Activated B cell treated with CpG ODN at 0.5 μM for 24 hours (primary cell): ENCODE measurements at regions of chr21 and their contacts with region 1.

Region 1: DNA sequence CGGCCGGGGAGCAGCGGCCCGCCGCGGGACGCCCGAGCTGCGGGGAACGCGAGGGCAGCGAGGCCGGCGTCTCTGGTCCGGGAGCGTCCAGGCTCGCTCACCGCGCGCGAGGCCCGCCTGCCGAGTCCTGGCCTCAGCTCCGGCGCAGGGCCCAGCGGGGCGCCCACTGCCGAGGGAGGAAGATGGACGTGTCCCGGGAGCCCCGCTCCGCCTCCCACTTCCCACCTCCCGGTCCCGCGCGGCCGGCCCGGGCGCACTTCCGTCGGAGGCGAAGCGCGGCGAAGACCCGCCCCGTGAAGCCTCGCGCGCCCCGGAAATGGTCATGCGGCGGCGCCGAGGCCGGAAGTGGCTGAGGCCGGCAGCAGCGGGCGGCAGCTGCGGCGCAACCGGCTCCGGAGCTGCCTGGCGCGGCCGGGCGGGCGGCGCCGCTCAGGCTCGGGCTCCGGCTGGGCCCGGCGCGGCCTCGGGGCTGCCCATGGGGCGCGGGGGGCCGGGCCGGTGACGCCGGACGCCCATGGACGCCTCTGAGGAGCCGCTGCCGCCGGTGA is at the start of gene TRAPPC10:
- DNase-seq: peak; percentile 83
- ATAC-seq: peak; percentile 66
- H3K4me3 Mint-ChIP-seq: peak within 1 kb of the TSS; percentile 87
- H3K27ac Mint-ChIP-seq: peak within 1 kb of the TSS; percentile 86
- H3K4me1 Mint-ChIP-seq: peaks cover 43% of the 10 kb centered on the region
- H3K27me3 Mint-ChIP-seq: no peaks in the 10 kb centered on the region
- CTCF ChIP-seq: no peak
- total RNA-seq, gene TRAPPC10: 77.8 and 96.0 TPM in 2 replicates

Region 2: DNA sequence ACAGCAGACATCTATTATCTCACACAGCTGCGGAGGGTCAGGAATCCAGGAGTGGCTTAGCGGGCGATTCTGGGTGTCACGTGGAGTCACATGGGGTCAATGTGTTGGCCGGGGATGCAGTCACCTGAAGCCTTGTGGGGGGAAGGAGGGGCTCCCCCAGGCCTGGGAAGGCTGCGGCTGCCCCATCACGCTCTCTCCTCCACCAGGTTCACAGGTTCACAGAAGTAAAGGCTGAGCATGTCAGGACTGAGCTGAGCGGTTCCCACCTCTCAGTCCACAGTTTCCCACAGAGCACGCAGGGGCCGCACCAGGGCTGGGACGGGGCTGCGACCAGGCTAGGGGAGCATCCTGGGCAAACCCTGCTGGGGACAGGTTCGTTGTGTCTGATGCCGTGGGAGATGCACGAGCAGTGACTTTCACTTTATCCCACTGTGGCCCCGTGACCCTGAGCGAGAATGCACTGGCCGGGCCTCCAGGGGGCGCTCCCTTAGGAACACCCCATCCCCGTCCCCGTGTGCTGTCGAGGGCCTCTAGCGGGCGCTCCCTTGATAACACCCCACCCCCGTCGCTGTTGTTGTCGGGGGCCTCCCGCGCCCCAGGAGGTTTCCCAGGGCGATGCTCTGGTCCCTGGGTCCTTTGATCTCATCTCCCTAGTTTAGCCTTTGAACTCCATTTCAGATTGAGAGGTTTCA is 73.2 kb before region 1 on chr21:
- CTCF ChIA-PET with region 1: no interaction called
- POLR2A ChIA-PET with region 1: interaction called, 8 read pairs
- intact Hi-C with region 1: loop called (anchors 2 kb)
- DNase-seq: peak; percentile 82
- ATAC-seq: peak; percentile 97
- H3K4me3 Mint-ChIP-seq: peak overlapping the region; percentile 92
- H3K27ac Mint-ChIP-seq: peak overlapping the region; percentile 74
- H3K4me1 Mint-ChIP-seq: peaks cover 22% of the 10 kb centered on the region
- H3K27me3 Mint-ChIP-seq: no peaks in the 10 kb centered on the region
- CTCF ChIP-seq: peak; percentile 47

Region 3: GRCh38 chr21:43956670-43957035 is 55.4 kb before region 1 on chr21:
- CTCF ChIA-PET with region 1: no interaction called
- POLR2A ChIA-PET with region 1: no interaction called
- intact Hi-C with region 1: no loop called
- DNase-seq: no peak
- ATAC-seq: no peak
- H3K4me3 Mint-ChIP-seq: peak overlapping the region; percentile 36
- H3K27ac Mint-ChIP-seq: no peak overlapping the region
- H3K4me1 Mint-ChIP-seq: peaks cover 31% of the 10 kb centered on the region
- H3K27me3 Mint-ChIP-seq: no peaks in the 10 kb centered on the region
- CTCF ChIP-seq: no peak

Region 4: DNA sequence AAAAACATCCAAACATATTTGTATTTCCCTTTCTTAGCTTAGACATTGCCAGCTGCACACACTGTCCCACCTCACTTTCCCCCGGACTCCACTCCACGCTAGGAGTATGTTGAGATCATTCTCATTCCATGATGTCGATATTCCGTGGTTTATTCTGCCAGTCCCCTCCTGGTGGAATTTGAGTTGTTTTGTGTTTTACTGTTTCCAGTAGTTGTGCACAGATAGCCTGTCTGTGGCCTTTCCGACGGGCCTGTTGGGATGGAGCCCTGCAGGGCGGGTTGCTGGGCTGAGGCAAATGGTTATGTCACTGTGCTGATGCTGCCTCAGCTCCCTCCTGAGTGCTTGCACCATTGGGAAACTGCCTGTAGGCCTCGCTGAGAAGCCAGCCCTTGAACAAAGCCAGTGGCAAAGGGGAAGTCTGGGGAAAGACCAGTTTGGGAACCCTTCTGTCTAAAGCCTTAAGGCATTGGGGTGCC is 12.9 kb after region 1 on chr21:
- CTCF ChIA-PET with region 1: no interaction called
- POLR2A ChIA-PET with region 1: interaction called, 3 read pairs
- intact Hi-C with region 1: loop called (anchors 1 kb)
- DNase-seq: no peak
- ATAC-seq: no peak
- H3K4me3 Mint-ChIP-seq: no peak overlapping the region
- H3K27ac Mint-ChIP-seq: peak overlapping the region; percentile 73
- H3K4me1 Mint-ChIP-seq: peaks cover 84% of the 10 kb centered on the region
- H3K27me3 Mint-ChIP-seq: no peaks in the 10 kb centered on the region
- CTCF ChIP-seq: no peak

Region 5: GRCh38 chr21:44089001-44089911 is 77.2 kb after region 1 on chr21:
- CTCF ChIA-PET with region 1: interaction called, 5 read pairs
- POLR2A ChIA-PET with region 1: interaction called, 10 read pairs
- intact Hi-C with region 1: no loop called
- DNase-seq: no peak
- ATAC-seq: peak; percentile 70
- H3K4me3 Mint-ChIP-seq: peak overlapping the region; percentile 78
- H3K27ac Mint-ChIP-seq: peak overlapping the region; percentile 97
- H3K4me1 Mint-ChIP-seq: peaks cover 64% of the 10 kb centered on the region
- H3K27me3 Mint-ChIP-seq: no peaks in the 10 kb centered on the region
- CTCF ChIP-seq: no peak

Region 6: DNA sequence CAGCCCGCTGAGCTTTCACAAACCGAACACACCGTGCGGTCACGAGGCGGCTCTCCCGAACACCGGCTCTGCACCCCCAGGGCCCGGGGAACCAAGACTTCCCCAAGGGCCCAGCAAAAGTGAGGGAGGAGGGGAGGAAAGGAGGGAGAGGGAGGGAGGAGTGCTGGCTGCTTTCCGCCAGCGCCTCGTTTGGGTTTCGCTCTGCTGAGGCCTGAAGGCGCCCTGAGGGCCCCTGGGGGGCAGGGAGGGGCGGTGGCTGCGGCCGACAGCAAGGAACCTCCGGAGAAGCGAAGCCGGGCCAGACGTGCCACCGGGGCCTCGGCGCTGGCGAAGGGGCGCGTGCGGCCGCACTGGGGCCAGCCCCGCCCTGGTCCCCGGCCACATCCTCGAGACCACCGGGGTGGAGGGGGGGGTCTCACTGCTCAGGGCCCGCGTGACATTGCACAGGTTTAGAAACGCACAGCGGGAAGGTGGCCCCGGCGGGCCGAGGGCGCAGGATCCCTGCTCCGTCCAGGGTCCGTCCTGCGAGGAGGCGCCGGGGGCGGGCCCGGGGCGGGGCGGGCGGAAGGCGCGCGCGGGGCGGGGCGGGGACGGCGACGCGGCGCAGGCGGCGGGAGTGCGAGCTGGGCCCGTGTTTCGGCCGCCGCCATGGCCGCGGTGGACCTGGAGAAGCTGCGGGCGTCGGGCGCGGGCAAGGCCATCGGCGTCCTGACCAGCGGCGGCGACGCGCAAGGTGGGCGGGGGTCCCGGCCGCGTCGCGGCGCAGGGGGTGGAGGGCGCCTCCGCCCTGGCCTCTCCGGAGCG is 287.6 kb after region 1 on chr21 and contains the start of gene PFKL:
- CTCF ChIA-PET with region 1: interaction called, 3 read pairs
- POLR2A ChIA-PET with region 1: interaction called, 5 read pairs
- intact Hi-C with region 1: loop called (anchors 2 kb)
- DNase-seq: peak; percentile 80
- ATAC-seq: peak; percentile 65
- H3K4me3 Mint-ChIP-seq: peak within 1 kb of the TSS; percentile 86
- H3K27ac Mint-ChIP-seq: peak within 1 kb of the TSS; percentile 95
- H3K4me1 Mint-ChIP-seq: peaks cover 73% of the 10 kb centered on the region
- H3K27me3 Mint-ChIP-seq: no peaks in the 10 kb centered on the region
- CTCF ChIP-seq: no peak
- total RNA-seq, gene PFKL: 167 and 174 TPM in 2 replicates

Region 7: DNA sequence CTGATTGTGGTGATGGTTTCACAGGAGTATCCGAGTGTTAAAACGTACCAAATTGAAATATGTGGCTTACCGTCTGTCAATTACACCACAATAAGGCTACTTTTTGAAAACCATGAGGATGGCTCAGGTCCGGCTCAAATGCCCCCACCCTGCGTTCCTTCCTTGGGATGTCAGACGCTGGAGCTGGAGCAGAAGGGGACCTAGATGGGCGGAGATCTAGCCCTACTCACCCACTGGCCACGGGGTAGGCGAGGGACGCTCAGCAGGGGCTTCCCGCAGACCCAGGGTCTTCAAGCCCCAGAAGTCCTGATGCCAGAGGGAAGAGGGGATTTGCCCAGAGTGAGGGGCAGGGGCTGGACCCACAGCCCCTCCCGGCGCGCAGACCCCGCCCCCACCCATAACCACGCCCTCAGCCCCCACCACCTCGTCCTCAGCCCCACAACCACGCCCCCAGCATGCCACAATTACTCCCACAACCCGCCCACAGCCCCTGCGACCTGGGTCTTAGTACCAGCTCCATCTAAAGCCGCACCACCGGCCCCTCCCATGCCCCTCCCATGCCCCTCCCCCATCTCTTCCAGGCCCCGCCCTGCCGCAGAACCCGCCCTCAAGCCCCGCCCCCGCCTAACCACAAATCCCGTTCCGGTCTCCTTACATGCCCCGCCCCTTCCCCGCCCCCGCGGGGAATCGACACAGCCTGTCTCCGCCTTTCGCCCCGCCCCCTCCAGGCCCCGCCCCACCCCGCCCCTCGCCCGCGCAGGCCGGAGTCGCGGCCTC is 442.9 kb after region 1 on chr21 and contains the start of gene LRRC3:
- CTCF ChIA-PET with region 1: no interaction called
- POLR2A ChIA-PET with region 1: no interaction called
- intact Hi-C with region 1: loop called (anchors 1 kb)
- DNase-seq: peak; percentile 71
- ATAC-seq: peak; percentile 82
- H3K4me3 Mint-ChIP-seq: peak within 1 kb of the TSS; percentile 75
- H3K27ac Mint-ChIP-seq: no peak within 1 kb of the TSS
- H3K4me1 Mint-ChIP-seq: peaks cover 2% of the 10 kb centered on the region
- H3K27me3 Mint-ChIP-seq: peaks cover 4% of the 10 kb centered on the region
- CTCF ChIP-seq: no peak
- total RNA-seq, gene LRRC3: 0.91 and 1.00 TPM in 2 replicates

Region 8: GRCh38 chr21:44478124-44478800 is 466.2 kb after region 1 on chr21:
- CTCF ChIA-PET with region 1: no interaction called
- POLR2A ChIA-PET with region 1: no interaction called
- intact Hi-C with region 1: loop called (anchors 2 kb)
- DNase-seq: no peak
- ATAC-seq: no peak
- H3K4me3 Mint-ChIP-seq: no peak overlapping the region
- H3K27ac Mint-ChIP-seq: no peak overlapping the region
- H3K4me1 Mint-ChIP-seq: peaks cover 4% of the 10 kb centered on the region
- H3K27me3 Mint-ChIP-seq: peaks cover 4% of the 10 kb centered on the region
- CTCF ChIP-seq: no peak